ENCODE measurements at regions of chr2 and their contacts with region 1.

Region 1: GRCh38 chr2:130797493-130798435 is 39.0 kb upstream of the ARHGEF4 start:
- DNase-seq: peak; percentile 88 to 92 (median 90)
- ATAC-seq: peak; percentile 98
- H3K4me3 ChIP-seq: peak overlapping the region; percentile 57
- H3K27ac ChIP-seq: no peak overlapping the region
- H3K4me1 ChIP-seq: peaks cover 0 to 21% of the 10 kb centered on the region in 2 experiments; a peak in 2 of 5 replicates
- H3K27me3 ChIP-seq: peaks cover 0 to 21% of the 10 kb centered on the region in 2 experiments; a peak in 2 of 5 replicates
- CTCF ChIP-seq: peak; percentile 80 to 97 (median 95)
- EP300 ChIP-seq: no peak
- POLR2A ChIP-seq: peak; percentile 60
- RAD21 ChIP-seq: peak; percentile 66 to 87

Region 2: DNA sequence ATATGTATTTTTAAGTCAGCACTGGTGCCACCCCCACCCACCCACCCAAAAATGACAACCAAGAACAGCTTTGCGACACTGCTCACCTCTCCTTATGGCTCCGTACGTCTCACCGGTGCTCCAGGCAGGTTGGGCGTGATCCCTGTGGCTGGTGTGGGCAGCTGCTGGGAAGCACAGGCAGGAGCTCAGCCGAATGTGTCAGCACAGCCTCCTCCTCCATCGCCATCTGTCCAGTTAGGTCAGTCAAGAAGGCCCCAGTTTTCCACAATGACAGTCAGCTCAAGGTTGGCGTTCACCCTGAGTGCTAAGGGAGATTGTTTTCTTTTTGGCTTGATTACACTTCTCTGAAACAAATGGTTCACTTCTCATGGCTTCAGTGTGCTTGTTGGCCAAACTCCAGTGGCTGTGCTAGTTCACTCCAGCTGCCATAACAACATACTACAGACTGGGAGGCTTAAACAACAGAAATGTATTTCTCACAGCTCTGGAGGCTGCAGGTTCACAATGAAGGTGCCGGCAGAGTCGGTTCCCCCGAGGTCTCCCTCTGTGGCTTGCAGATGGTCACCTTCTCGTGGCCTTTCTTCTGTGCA is 12.2 kb before region 1 on chr2:
- CTCF ChIA-PET with region 1: no interaction called
- POLR2A ChIA-PET with region 1: no interaction called
- in situ Hi-C with region 1: no loop called
- intact Hi-C with region 1: no loop called
- DNase-seq: no peak
- ATAC-seq: no peak
- H3K4me3 ChIP-seq: no peak overlapping the region
- H3K27ac ChIP-seq: no peak overlapping the region
- H3K4me1 ChIP-seq: no peaks in the 10 kb centered on the region
- H3K27me3 ChIP-seq: peaks cover 12 to 29% of the 10 kb centered on the region in 2 experiments
- CTCF ChIP-seq: no peak
- EP300 ChIP-seq: no peak
- POLR2A ChIP-seq: no peak
- RAD21 ChIP-seq: no peak

Region 3: DNA sequence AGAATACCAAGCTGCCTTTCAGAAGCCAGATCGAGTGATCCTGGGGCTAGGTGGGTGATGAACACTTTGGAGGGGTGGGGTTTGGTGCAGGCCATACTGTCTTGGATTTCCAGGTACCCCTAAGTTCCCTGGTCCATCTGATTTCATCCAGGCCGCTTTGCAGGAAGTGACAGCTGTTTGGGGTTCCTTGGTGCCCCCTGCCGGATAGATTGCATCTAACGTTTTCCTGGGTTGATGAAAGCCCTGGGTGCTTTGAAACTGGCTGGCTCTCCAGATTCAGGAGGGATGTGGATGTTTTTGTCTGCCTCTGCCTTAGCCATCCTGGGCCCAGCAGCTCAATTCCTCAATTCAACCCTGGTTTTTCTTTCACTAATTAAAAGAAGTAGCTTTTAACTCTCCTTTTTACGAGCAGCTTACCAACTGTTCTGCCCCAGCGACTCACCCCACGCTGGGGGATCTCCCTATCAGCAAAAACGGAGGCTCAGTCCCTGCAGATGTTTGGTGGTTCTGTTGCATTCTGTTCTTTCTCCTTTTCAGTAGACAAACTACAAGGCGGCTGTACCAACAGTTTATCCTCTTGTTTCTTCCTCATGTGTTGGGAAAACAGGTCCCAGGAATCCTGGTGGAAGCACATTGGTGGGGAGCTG is 76.1 kb after region 1 on chr2:
- CTCF ChIA-PET with region 1: interaction called, 14 read pairs
- POLR2A ChIA-PET with region 1: interaction called, 3 read pairs
- in situ Hi-C with region 1: no loop called
- intact Hi-C with region 1: loop called (anchors 1 kb)
- DNase-seq: peak; percentile 55 to 66 (median 60)
- ATAC-seq: peak; percentile 88
- H3K4me3 ChIP-seq: no peak overlapping the region
- H3K27ac ChIP-seq: no peak overlapping the region
- H3K4me1 ChIP-seq: no peaks in the 10 kb centered on the region
- H3K27me3 ChIP-seq: peaks cover 13 to 52% of the 10 kb centered on the region in 2 experiments
- CTCF ChIP-seq: peak; percentile 65 to 77 (median 67)
- EP300 ChIP-seq: no peak
- POLR2A ChIP-seq: no peak
- RAD21 ChIP-seq: peak; percentile 50 to 71

Region 4: GRCh38 chr2:130920415-130921163 is 122.8 kb after region 1 on chr2:
- CTCF ChIA-PET with region 1: interaction called, 18 read pairs
- POLR2A ChIA-PET with region 1: no interaction called
- in situ Hi-C with region 1: no loop called
- intact Hi-C with region 1: loop called (anchors 1 kb)
- DNase-seq: peak; percentile 67 to 75 (median 72)
- ATAC-seq: peak; percentile 87
- H3K4me3 ChIP-seq: no peak overlapping the region
- H3K27ac ChIP-seq: no peak overlapping the region
- H3K4me1 ChIP-seq: 0 out of 5 replicates have a peak, but pooled peaks cover 0 to 3% of the 10 kb centered on the region in 2 experiments
- H3K27me3 ChIP-seq: peaks cover 15 to 35% of the 10 kb centered on the region in 2 experiments; a peak in 4 of 5 replicates
- CTCF ChIP-seq: peak; percentile 80 to 82 (median 82)
- EP300 ChIP-seq: no peak
- POLR2A ChIP-seq: no peak
- RAD21 ChIP-seq: peak; percentile 48 to 78; a peak in 3 of 4 replicates